ENCODE measurements at regions of chr13 and their contacts with region 1.

Region 1: DNA sequence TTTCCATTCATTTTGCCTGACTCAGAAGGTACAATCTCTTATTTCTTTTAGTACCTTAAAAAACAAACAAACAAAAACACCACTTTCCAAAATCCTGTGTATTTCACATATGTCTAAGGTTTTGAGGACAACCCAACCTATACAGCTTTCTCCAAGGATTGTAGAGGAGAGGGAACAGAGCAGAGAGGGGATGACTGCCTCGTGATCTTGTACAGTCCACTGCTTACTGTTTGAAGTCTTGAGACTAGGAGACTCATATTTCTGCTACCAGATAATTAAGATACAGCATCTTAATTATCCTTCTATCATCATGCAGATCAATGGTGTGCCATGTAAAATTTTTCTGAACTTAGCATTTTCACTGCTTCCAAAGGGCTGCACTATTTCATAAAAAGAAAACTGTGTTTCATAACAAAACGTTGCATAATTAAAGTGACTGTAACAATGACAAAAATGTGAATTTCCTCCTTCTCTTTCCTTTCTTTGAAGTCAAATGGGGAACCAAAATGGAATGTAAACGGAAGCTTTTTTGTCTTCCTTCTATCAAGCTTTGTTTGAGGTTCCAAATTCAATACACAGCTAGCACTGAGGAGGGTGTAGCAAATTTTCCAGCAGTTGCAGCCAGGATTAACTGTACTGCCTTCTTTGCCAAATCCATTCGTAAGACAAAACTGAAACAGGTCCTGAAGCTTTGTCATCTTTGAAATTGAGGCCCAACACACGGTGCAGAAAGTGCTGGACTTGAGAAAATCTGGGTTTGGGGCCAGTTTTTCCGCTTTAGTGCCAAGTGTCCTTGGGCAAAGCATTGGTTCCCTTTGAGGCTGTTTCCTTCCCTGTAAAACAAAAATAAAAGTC is 34.9 kb upstream of the RCBTB2 start:
- DNase-seq: no peak
- ATAC-seq: peak; percentile 42 to 48

Region 2: GRCh38 chr13:47990920-47991466 is 576.7 kb before region 1 on chr13:
- intact Hi-C with region 1: no loop called
- DNase-seq: no peak
- ATAC-seq: peak in 1 of 2 donors; percentile 87

Region 3: DNA sequence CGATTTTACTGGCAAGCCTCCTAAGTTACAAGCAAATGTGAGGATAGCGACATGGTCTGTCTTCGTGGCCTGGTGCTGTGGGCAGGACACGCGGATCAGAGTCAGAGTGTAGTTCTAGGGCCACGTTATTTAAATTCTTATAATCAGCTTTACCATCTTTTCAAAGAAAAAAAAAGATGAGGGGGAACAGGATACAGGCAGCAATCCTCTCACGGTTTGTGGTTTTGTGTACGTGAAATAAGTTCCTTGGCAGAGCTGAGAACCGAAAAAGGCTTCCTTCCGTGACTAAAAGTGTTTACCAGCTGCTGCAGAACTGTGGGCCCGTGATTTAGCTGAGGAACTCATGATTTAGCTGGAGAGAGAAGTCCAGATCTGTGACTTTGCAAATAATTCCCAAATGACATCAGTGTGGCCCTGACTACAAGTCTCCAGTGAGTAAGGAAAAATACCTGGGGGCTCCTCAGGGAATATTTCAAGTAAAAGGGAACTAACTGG is 62.1 kb before region 1 on chr13:
- intact Hi-C with region 1: loop called in 1 of 2 experiments (anchors 5 kb)
- DNase-seq: no peak
- ATAC-seq: peak; percentile 56 to 68

Region 4: DNA sequence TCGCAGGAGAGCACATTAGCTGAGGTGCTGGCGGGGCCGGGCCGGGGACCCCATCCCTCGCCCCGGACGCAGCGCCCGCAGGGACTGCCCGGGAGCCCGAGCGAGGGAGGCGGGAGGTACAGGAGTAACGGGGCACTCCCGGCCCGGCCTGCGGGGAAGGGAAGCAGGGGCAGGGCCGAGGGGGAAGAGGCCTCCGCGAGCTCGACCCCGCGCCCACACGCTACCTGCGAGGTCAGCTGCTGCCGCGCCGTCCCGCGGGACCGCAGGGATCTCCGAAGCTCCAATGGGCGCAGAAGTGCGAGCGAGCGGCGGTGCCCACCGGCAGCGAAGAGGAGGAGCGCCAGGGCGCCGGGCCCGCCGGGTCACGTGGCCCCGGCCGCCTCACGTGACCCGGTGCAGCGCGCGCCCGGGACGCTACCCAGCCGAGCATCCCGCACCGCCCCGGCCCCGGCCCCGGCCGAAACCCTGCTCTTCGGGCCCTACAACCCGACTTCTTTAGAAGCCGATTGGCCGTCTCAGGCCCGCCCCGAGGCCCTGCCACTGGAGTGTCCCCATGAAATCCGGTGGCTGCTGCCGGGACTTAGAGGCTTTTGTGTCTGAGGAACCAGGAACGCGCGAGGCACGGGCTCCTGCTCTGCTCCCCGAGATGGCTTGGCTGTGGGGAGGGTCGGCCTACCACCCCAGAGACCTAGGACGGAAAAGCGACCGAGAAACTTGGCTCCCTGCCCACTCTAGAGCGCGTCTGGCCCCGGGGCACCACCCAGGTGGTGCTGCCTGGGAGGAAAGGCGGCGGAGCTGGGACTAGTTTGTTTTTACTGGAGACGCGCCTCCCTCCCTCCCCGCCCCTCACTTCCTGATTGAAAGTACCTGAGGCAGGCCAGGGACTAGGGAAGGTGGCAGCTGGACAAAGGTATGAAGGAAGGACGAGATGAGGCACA is 1017.7 kb after region 1 on chr13 and contains the start of gene RCBTB1:
- intact Hi-C with region 1: no loop called
- DNase-seq: peak; percentile 72
- ATAC-seq: peak; percentile 99
- total RNA-seq, gene RCBTB1: 12.7 to 19.3 TPM

Measured in left cardiac atrium (tissue), 4 donors.